Tibial artery (tissue), 4 donors: ENCODE measurements at regions of chr10 and their contacts with region 1.

Region 1: DNA sequence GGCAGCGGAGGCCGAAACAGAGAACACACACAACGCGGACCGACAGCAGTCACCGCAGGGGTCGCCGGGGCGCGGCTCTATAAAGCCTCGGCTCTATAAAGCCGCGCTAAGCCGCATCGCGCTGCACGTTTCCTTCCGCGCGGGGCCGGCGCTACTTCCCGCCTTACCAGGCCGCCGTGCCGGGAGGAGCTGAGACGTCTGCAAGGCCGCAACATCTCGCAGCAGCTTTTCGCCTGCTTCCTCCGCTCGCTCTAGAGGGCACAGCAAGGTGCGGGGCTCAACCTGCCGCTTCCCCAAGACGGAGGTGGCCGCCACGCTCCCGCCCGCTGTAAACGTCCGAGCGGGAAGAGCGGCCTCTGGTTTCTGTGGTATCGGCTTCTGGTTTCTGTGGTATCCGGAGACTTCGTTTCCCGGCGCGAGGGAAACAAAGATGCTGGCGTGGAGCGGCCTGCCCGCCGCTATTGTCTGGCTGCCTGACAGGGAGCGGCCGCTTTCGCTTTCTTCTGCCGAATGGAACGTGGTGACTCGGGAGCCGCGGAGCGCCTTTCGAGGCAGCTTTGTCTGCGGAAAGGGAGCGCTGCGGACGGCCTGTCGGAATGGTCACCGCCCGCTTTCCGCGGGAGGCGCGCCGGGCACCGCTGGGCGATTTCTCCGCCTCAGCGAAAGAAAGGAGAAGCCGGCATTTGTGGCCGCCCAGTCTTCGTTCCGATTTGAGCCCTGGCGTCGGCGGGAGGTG is 91.8 kb downstream of the SPAG6 start:
- DNase-seq: peak; percentile 86 to 93
- H3K4me3 ChIP-seq: peak overlapping the region; percentile 79 to 91
- H3K27ac ChIP-seq: peak overlapping the region; percentile 95 to 96
- H3K4me1 ChIP-seq: peaks cover 0 to 21% (median 13%) of the 10 kb centered on the region in 4 donors
- H3K27me3 ChIP-seq: no peaks in the 10 kb centered on the region
- CTCF ChIP-seq: no peak

Region 2: DNA sequence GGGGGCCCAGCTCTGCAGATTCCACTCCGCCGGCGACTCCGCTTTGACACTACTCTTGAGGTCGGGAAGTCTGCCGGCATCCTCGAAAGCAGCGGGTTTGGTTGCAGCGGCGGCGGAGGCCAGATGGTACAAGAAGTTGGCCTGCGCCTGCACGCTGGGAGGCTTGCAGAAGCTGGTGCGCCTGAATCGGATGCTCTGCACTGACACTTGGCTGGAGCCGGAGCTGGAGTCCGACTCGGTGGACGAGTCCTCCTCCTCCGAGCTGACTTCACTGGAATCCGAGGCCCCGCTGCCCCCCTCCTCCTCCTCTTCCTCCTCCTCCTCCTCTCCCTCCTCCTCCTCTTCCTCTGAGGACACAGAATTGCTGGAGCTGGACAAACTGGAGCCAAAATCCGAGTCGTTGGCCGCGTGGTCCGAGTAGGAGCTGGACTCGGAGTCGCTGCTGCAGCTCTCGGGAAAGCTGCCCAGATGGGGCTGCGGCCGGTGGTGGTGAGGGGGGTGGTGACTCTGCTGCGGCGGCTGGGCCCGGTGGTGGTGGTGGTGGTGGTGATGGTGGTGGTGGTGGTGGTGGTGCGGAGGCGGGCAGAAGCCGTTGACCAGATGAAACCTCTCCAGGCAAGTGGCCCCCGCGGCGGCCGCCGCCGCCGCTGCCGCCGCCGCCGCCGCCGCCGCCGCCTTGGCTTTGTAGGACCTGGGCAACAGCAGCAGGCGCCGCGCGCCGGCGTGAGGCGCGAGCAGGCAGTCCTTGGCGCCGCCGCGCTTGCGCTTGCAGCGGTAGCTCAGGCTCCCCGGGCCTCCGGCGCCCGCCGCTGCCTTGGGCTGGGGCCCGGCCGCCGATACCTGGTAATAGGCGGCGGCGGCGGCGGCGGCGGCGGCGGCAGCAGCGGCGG is 920.6 kb before region 1 on chr10:
- intact Hi-C with region 1: loop called (anchors 10 kb)
- DNase-seq: peak; percentile 51 to 75
- H3K4me3 ChIP-seq: peak overlapping the region; percentile 52 to 65
- H3K27ac ChIP-seq: peak overlapping the region in 1 of 2 donors; percentile 18
- H3K4me1 ChIP-seq: peaks cover 0 to 26% (median 15%) of the 10 kb centered on the region in 4 donors
- H3K27me3 ChIP-seq: peaks cover 0 to 80% of the 10 kb centered on the region in 2 donors
- CTCF ChIP-seq: no peak

Region 3: DNA sequence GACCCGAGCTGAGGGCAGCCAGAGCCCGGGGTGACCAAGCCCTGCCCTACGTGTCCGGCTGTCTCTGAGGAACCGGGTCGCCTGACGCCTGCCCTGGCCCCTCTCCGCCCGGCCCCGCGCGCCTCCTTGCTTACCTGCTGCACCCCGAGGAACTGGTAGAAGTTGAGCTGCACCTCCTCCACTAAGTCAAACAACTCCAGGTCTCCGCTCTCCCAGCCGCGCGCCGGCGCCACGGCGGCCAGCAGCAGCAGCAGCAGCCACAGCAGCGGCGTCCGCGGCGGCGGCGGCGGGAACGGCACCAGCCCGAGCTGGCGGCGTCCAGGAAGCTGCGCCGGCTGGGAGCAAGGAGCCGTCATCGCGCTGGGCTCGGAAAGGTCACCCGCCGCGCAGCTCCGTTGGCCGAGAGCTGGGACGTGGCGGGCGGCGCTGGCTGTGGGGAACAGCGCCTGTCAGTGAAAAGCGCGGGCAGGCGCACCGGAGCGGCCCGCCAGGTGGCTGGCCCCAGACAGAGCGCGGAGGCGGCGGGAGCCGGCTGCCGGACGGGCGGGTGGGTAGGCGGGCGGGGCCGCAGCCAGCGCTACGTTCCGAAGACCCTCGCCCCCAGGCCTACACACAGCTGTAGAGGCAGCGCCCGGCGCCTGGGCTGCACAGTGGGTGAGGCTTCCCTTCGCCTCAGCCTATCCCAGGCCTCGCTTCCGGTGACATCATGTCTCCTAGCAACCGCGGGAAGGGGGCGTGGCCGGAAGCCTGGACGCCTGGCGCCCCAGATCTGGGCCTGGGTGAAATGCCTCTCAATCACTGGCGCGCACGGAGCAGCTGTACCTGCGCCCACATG is 433.8 kb before region 1 on chr10 and contains the start of gene DNAJC1:
- intact Hi-C with region 1: loop called (anchors 10 kb)
- DNase-seq: peak; percentile 97 to 98
- H3K4me3 ChIP-seq: peak within 1 kb of the TSS; percentile 82 to 91
- H3K27ac ChIP-seq: peak within 1 kb of the TSS; percentile 92 to 93
- H3K4me1 ChIP-seq: peaks cover 0 to 9% (median 5%) of the 10 kb centered on the region in 4 donors
- H3K27me3 ChIP-seq: no peaks in the 10 kb centered on the region
- CTCF ChIP-seq: peak in 1 of 2 experiments; percentile 28

Region 4: DNA sequence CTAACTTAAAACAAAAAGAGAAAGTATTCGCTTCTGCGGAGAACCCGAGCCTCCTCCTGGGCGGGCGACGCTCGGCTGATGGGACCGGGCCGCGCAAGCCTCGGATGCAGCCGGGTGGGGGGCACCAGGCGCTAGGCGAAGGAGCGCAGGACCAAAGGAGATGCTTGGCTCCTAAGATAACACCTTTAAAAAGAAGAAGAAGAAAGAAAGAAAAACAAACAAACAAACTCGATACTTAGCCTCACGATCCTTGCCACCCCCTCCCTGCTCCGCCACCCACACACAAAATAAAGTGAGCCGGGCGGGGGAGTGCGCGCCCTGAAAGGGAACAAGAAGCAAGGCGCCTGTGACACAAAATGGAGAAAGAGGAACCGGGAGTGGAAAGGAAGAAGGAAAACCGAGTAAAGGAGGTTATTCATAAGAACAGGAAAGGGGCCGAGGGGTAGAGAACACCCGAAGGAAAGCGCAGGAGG is 185.3 kb before region 1 on chr10:
- intact Hi-C with region 1: loop called (anchors 10 kb)
- DNase-seq: peak; percentile 67 to 81
- H3K4me3 ChIP-seq: peak overlapping the region; percentile 66 to 89
- H3K27ac ChIP-seq: peak overlapping the region; percentile 97 to 99
- H3K4me1 ChIP-seq: no peaks in the 10 kb centered on the region
- H3K27me3 ChIP-seq: no peaks in the 10 kb centered on the region
- CTCF ChIP-seq: no peak

Region 5: GRCh38 chr10:22340362-22341189 is 96.5 kb before region 1 on chr10:
- intact Hi-C with region 1: loop called (anchors 10 kb)
- DNase-seq: peak; percentile 54 to 79
- H3K4me3 ChIP-seq: peak overlapping the region; percentile 73 to 75
- H3K27ac ChIP-seq: peak overlapping the region; percentile 95 to 96
- H3K4me1 ChIP-seq: peaks cover 0 to 39% (median 27%) of the 10 kb centered on the region in 4 donors
- H3K27me3 ChIP-seq: peaks cover 21 to 82% of the 10 kb centered on the region in 2 donors
- CTCF ChIP-seq: no peak